ENCODE measurements at regions of chr13 and their contacts with region 1.

Region 1: GRCh38 chr13:91381371-91381770 is 17.1 kb upstream of the GPC5 start:
- DNase-seq: no peak
- H3K4me3 ChIP-seq: no peak overlapping the region
- H3K27ac ChIP-seq: no peak overlapping the region
- H3K4me1 ChIP-seq: no peaks in the 10 kb centered on the region
- H3K27me3 ChIP-seq: no peaks in the 10 kb centered on the region
- CTCF ChIP-seq: peak in 1 of 3 experiments; percentile 21

Region 2: GRCh38 chr13:90846936-90847335 is 534.4 kb before region 1 on chr13:
- intact Hi-C with region 1: no loop called
- DNase-seq: no peak
- H3K4me3 ChIP-seq: no peak overlapping the region
- H3K27ac ChIP-seq: no peak overlapping the region
- H3K4me1 ChIP-seq: no peaks in the 10 kb centered on the region
- H3K27me3 ChIP-seq: no peaks in the 10 kb centered on the region
- CTCF ChIP-seq: no peak

Region 3: GRCh38 chr13:91185294-91185863 is 196.0 kb before region 1 on chr13:
- intact Hi-C with region 1: no loop called
- DNase-seq: no peak
- H3K4me3 ChIP-seq: no peak overlapping the region
- H3K27ac ChIP-seq: no peak overlapping the region
- H3K4me1 ChIP-seq: no peaks in the 10 kb centered on the region
- H3K27me3 ChIP-seq: no peaks in the 10 kb centered on the region
- CTCF ChIP-seq: peak in 2 of 3 experiments; percentile 36 to 46

Region 4: GRCh38 chr13:91722267-91722884 is 341.0 kb after region 1 on chr13:
- intact Hi-C with region 1: loop called (anchors 10 kb)
- DNase-seq: no peak
- H3K4me3 ChIP-seq: no peak overlapping the region
- H3K27ac ChIP-seq: no peak overlapping the region
- H3K4me1 ChIP-seq: no peaks in the 10 kb centered on the region
- H3K27me3 ChIP-seq: no peaks in the 10 kb centered on the region
- CTCF ChIP-seq: peak in 2 of 3 experiments; percentile 31 to 43